Activated CD8-positive, alpha-beta memory T cell treated with anti-CD3 and anti-CD28 coated beads, Interleukin-2, amount 10 ng/mL, durations not matched to agents 7 days and 5 days (primary cell): ENCODE measurements at regions of chr4 and their contacts with region 1.

Region 1: DNA sequence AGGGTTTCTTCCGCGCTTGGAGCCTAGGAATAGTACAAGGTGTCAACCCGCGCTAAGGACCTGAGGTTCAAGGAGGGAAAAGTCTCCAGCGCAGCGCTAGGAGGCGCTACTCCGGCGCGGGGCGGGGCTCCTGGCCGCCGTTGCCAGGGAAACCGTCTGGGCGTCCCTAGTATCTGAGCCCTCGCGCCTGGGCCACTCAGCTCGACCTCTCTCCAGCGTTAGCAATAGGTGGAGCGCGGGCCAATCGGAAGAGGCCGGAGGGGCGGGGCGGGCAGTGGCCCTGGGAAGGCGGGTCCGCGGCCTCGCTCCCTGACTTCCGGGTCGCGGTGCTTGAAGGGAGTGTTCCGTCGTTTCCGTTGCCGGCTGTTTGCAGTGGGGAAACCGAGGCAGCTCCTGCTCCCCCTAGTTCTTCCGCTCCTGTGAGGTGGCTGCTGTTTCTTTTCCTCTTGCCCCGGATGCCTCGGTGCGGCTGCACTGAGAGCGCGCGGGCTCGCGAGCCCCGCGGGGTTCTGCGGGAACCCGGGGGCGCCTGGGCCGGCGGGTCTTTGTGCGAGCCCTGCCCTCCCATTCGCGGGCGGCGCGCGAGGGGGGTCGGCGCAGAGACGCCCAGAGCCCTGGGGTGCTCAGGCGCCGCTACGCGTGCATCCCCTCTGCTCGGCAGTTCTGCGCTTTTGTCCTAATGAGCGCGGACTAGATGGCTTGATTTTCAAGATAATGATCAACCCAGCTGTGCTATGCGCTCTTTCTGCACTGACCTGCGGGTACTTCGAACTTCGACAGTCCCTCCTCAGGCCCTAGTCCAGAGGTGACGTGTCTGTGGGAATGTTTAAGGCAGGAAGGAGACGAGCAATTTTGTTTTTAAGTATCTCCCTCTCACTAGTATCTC is at the start of gene ELMOD2:
- DNase-seq: peak; percentile 98
- ATAC-seq: peak; percentile 100
- H3K4me3 Mint-ChIP-seq: peak within 1 kb of the TSS; percentile 90
- H3K27ac Mint-ChIP-seq: peak within 1 kb of the TSS; percentile 77
- H3K4me1 Mint-ChIP-seq: peaks cover 19% of the 10 kb centered on the region
- H3K27me3 Mint-ChIP-seq: no peaks in the 10 kb centered on the region
- total RNA-seq, gene ELMOD2: 12.7 to 15.1 TPM

Region 2: GRCh38 chr4:140373328-140374129 is 150.6 kb before region 1 on chr4 and contains the start of gene SCOC:
- CTCF ChIA-PET with region 1: interaction called, 16 read pairs
- DNase-seq: peak; percentile 99
- ATAC-seq: peak; percentile 97
- H3K4me3 Mint-ChIP-seq: no peak within 1 kb of the TSS
- H3K27ac Mint-ChIP-seq: peak within 1 kb of the TSS; percentile 45
- H3K4me1 Mint-ChIP-seq: peaks cover 24% of the 10 kb centered on the region
- H3K27me3 Mint-ChIP-seq: no peaks in the 10 kb centered on the region
- total RNA-seq, gene SCOC: 22.3 to 26.6 TPM

Region 3: GRCh38 chr4:140388015-140388414 is 136.1 kb before region 1 on chr4:
- CTCF ChIA-PET with region 1: no interaction called
- DNase-seq: no peak
- ATAC-seq: no peak
- H3K4me3 Mint-ChIP-seq: no peak overlapping the region
- H3K27ac Mint-ChIP-seq: no peak overlapping the region
- H3K4me1 Mint-ChIP-seq: no peaks in the 10 kb centered on the region
- H3K27me3 Mint-ChIP-seq: peaks cover 19% of the 10 kb centered on the region

Region 4: DNA sequence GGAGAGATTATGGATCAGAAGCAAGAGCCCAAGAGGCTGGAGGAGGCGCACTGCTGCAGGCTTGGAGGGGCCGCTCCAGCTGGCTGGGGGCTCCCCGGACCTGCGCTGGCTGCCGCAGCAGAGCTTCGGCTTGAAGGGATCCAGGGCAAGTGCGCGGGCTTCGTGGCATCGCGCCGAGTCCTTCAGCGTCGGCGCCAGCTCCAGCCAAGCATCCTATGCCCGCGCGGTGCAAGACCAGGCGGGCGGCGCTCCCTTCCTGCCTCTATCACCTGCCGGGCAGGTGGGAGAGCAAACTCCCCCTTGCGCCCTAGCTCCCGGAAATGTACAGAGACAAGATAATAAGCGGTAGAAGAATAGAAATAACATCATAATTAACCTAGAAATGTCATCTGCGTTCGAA is 55.2 kb after region 1 on chr4:
- CTCF ChIA-PET with region 1: no interaction called
- DNase-seq: no peak
- ATAC-seq: no peak
- H3K4me3 Mint-ChIP-seq: no peak overlapping the region
- H3K27ac Mint-ChIP-seq: no peak overlapping the region
- H3K4me1 Mint-ChIP-seq: no peaks in the 10 kb centered on the region
- H3K27me3 Mint-ChIP-seq: peaks cover 44% of the 10 kb centered on the region